GM18951 (cell line): ENCODE measurements at regions of chr12 and their contacts with region 1.

Region 1: GRCh38 chr12:96578526-96579125 is 89.2 kb downstream of the CFAP54 start:
- POLR2A ChIP-seq: no peak

Region 2: GRCh38 chr12:96078231-96079135 is 500.1 kb before region 1 on chr12:
- in situ Hi-C with region 1: no loop called
- POLR2A ChIP-seq: no peak

Region 3: GRCh38 chr12:96985480-96986362 is 407.1 kb after region 1 on chr12:
- in situ Hi-C with region 1: loop called (anchors 25 kb)
- POLR2A ChIP-seq: no peak

Region 4: GRCh38 chr12:97308576-97309198 is 730.1 kb after region 1 on chr12:
- in situ Hi-C with region 1: loop called (anchors 25 kb)
- POLR2A ChIP-seq: no peak